ENCODE measurements at regions of chr13 and their contacts with region 1.

Region 1: GRCh38 chr13:44274452-44275205 is 99.0 kb upstream of the SERP2 start:
- DNase-seq: peak in 10 of 14 experiments; percentile 2 to 91 (median 27)
- ATAC-seq: peak; percentile 95
- H3K4me3 ChIP-seq: peak overlapping the region; percentile 42
- H3K4me3 Mint-ChIP-seq: peak overlapping the region; percentile 36
- H3K27ac ChIP-seq: peak overlapping the region; percentile 65 to 85
- H3K27ac Mint-ChIP-seq: peak overlapping the region; percentile 95
- H3K4me1 ChIP-seq: peaks cover 24% of the 10 kb centered on the region
- H3K4me1 Mint-ChIP-seq: peaks cover 47% of the 10 kb centered on the region
- H3K27me3 ChIP-seq: no peaks in the 10 kb centered on the region
- H3K27me3 Mint-ChIP-seq: no peaks in the 10 kb centered on the region
- CTCF ChIP-seq: no peak

Region 2: GRCh38 chr13:44141725-44142539 is 132.7 kb before region 1 on chr13:
- CTCF ChIA-PET with region 1: no interaction called
- POLR2A ChIA-PET with region 1: interaction called, 12 read pairs
- intact Hi-C with region 1: loop called (anchors 2 to 10 kb)
- DNase-seq: peak; percentile 76 to 95 (median 90)
- ATAC-seq: peak; percentile 96
- H3K4me3 ChIP-seq: peak overlapping the region; percentile 84
- H3K4me3 Mint-ChIP-seq: peak overlapping the region; percentile 93
- H3K27ac ChIP-seq: peak overlapping the region; percentile 48 to 76
- H3K27ac Mint-ChIP-seq: peak overlapping the region; percentile 77
- H3K4me1 ChIP-seq: peaks cover 15% of the 10 kb centered on the region
- H3K4me1 Mint-ChIP-seq: peaks cover 16% of the 10 kb centered on the region
- H3K27me3 ChIP-seq: no peaks in the 10 kb centered on the region
- H3K27me3 Mint-ChIP-seq: no peaks in the 10 kb centered on the region
- CTCF ChIP-seq: no peak

Region 3: DNA sequence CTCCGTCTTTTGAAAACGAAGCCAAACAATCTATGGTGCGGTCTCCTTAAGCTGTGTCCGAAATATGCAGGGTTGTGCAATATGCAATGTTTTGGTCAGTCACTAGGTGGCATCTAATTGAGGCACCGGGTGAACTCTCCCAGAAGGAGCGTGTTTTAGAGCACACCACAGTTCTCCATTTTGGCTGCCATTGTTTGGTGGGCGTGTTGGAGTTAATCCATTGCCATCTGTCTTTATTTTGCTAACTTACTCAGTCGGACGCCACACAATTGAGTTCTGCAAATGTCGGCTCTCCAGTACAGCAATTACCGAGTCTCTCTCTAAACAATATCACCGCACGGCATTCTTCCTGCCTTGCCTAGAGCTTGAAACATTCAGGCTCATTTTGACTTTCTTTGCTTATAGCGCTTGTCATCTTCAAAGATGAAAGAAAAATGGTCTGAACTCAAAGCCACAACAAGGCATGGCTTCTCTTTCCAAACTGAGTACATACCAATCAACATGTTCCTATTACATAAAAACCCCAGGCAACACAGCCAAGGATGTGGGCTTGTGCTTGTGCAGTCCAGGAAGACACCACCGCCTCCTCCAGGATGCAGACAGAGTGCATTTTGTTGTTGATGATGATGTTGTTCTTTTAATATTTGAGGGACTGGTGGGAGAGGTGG is 83.0 kb before region 1 on chr13:
- CTCF ChIA-PET with region 1: no interaction called
- POLR2A ChIA-PET with region 1: interaction called, 6 read pairs
- intact Hi-C with region 1: loop called in 1 of 2 experiments (anchors 5 kb)
- DNase-seq: peak in 13 of 14 experiments; percentile 3 to 80 (median 23)
- ATAC-seq: peak; percentile 87
- H3K4me3 ChIP-seq: peak overlapping the region; percentile 32
- H3K4me3 Mint-ChIP-seq: peak overlapping the region; percentile 35
- H3K27ac ChIP-seq: peak overlapping the region in 1 of 2 donors; percentile 41
- H3K27ac Mint-ChIP-seq: peak overlapping the region; percentile 79
- H3K4me1 ChIP-seq: peaks cover 13% of the 10 kb centered on the region
- H3K4me1 Mint-ChIP-seq: peaks cover 31% of the 10 kb centered on the region
- H3K27me3 ChIP-seq: no peaks in the 10 kb centered on the region
- H3K27me3 Mint-ChIP-seq: no peaks in the 10 kb centered on the region
- CTCF ChIP-seq: peak; percentile 57

Region 4: DNA sequence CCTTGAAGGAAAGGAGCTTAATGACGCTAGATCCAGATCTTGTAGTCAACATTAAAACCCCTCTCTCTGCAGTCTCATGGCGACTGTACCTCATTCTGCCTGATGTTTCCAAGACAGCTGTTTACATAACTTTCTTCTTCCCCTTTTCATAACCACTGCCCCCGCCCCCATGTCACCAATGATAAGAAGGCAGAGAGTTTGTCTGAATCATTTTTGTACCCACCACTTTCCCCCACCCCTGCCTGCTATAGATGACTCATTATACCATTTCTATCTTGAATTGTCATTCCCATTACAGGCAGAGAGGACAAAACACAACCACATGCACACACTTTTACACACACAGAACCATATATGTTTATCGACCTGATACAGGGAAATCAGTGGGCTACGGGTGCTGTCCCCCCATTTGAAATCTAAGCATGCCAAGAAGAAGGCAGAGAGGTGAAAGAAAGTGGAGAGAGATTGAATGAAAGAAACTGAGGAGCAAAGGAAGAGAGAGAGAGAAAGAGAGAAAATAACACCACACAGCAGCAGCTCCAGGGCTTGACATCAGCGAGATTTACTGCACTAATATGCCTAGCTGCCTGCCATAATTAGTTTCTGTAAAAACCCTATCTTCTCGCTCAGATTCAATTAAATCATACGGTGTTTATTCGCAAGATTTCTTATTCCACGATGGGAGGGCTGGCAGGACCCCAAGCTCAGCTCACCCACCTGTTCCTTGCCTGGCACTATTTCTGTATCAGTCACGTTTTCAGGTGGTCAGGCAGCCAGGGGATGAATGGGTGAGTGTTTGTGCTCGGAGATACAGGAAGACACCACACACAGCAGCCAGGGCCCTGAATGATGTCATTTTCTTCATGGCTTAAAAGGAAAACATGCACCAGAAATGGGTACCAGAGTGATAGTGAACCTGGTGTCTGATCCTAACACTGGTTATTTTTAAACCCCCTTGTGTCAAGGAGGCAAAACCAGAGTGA is 15.3 kb before region 1 on chr13:
- CTCF ChIA-PET with region 1: interaction called, 5 read pairs
- POLR2A ChIA-PET with region 1: interaction called, 8 read pairs
- intact Hi-C with region 1: loop called in 1 of 2 experiments (anchors 2 kb)
- DNase-seq: peak; percentile 13 to 76 (median 64)
- ATAC-seq: peak; percentile 82
- H3K4me3 ChIP-seq: peak overlapping the region; percentile 8
- H3K4me3 Mint-ChIP-seq: peak overlapping the region; percentile 58
- H3K27ac ChIP-seq: no peak overlapping the region
- H3K27ac Mint-ChIP-seq: peak overlapping the region; percentile 65
- H3K4me1 ChIP-seq: peaks cover 15% of the 10 kb centered on the region
- H3K4me1 Mint-ChIP-seq: peaks cover 19% of the 10 kb centered on the region
- H3K27me3 ChIP-seq: no peaks in the 10 kb centered on the region
- H3K27me3 Mint-ChIP-seq: peaks cover under 1% of the 10 kb centered on the region
- CTCF ChIP-seq: no peak

Region 5: GRCh38 chr13:44306401-44307192 is 32.0 kb after region 1 on chr13:
- CTCF ChIA-PET with region 1: no interaction called
- POLR2A ChIA-PET with region 1: interaction called, 12 read pairs
- intact Hi-C with region 1: no loop called
- DNase-seq: peak in 4 of 14 experiments; percentile 7 to 25 (median 19)
- ATAC-seq: peak; percentile 64
- H3K4me3 ChIP-seq: peak overlapping the region; percentile 19
- H3K4me3 Mint-ChIP-seq: peak overlapping the region; percentile 61
- H3K27ac ChIP-seq: no peak overlapping the region
- H3K27ac Mint-ChIP-seq: peak overlapping the region; percentile 12
- H3K4me1 ChIP-seq: peaks cover 11% of the 10 kb centered on the region
- H3K4me1 Mint-ChIP-seq: peaks cover 33% of the 10 kb centered on the region
- H3K27me3 ChIP-seq: no peaks in the 10 kb centered on the region
- H3K27me3 Mint-ChIP-seq: peaks cover 4% of the 10 kb centered on the region
- CTCF ChIP-seq: no peak

Region 6: GRCh38 chr13:44435142-44435982 is 160.7 kb after region 1 on chr13:
- CTCF ChIA-PET with region 1: no interaction called
- POLR2A ChIA-PET with region 1: interaction called, 13 read pairs
- intact Hi-C with region 1: loop called (anchors 5 to 10 kb)
- DNase-seq: peak; percentile 76 to 95 (median 80)
- ATAC-seq: peak; percentile 83
- H3K4me3 ChIP-seq: peak overlapping the region; percentile 64
- H3K4me3 Mint-ChIP-seq: peak overlapping the region; percentile 91
- H3K27ac ChIP-seq: peak overlapping the region; percentile 3 to 43
- H3K27ac Mint-ChIP-seq: peak overlapping the region; percentile 57
- H3K4me1 ChIP-seq: peaks cover 29% of the 10 kb centered on the region
- H3K4me1 Mint-ChIP-seq: peaks cover 35% of the 10 kb centered on the region
- H3K27me3 ChIP-seq: peaks cover 14 to 18% of the 10 kb centered on the region in 2 experiments
- H3K27me3 Mint-ChIP-seq: peaks cover 12% of the 10 kb centered on the region
- CTCF ChIP-seq: no peak